ENCODE measurements at regions of chr20 and their contacts with region 1.

Region 1: GRCh38 chr20:3222635-3223600 is 13.6 kb downstream of the ITPA start:
- DNase-seq: peak; percentile 30 to 84 (median 51)
- ATAC-seq: peak; percentile 89 to 93
- H3K4me3 Mint-ChIP-seq: peak overlapping the region; percentile 36 to 75 (median 64)
- H3K27ac Mint-ChIP-seq: peak overlapping the region; percentile 80 to 94 (median 91)
- H3K4me1 Mint-ChIP-seq: peaks cover 3 to 32% (median 22%) of the 10 kb centered on the region in 4 donors
- H3K27me3 Mint-ChIP-seq: no peaks in the 10 kb centered on the region

Region 2: GRCh38 chr20:2972126-2972525 is 250.8 kb before region 1 on chr20:
- POLR2A ChIA-PET with region 1: no interaction called
- DNase-seq: no peak
- ATAC-seq: no peak
- H3K4me3 Mint-ChIP-seq: no peak overlapping the region
- H3K27ac Mint-ChIP-seq: no peak overlapping the region
- H3K4me1 Mint-ChIP-seq: peaks cover 2 to 6% (median 4%) of the 10 kb centered on the region in 4 donors
- H3K27me3 Mint-ChIP-seq: no peaks in the 10 kb centered on the region

Region 3: GRCh38 chr20:3209257-3209945 is 13.5 kb before region 1 on chr20 and contains the start of gene ITPA:
- POLR2A ChIA-PET with region 1: interaction called, 24 read pairs
- DNase-seq: peak; percentile 19 to 79 (median 48)
- ATAC-seq: peak; percentile 43 to 60
- H3K4me3 Mint-ChIP-seq: peak within 1 kb of the TSS; percentile 86 to 99 (median 96)
- H3K27ac Mint-ChIP-seq: peak within 1 kb of the TSS; percentile 57 to 99 (median 94)
- H3K4me1 Mint-ChIP-seq: peaks cover 23 to 42% (median 35%) of the 10 kb centered on the region in 4 donors
- H3K27me3 Mint-ChIP-seq: no peaks in the 10 kb centered on the region
- polyA plus RNA-seq, gene ITPA: 46.2 to 72.9 (median 56.9) TPM

Region 4: GRCh38 chr20:3239026-3239866 is 16.3 kb after region 1 on chr20 and contains the start of gene SLC4A11:
- POLR2A ChIA-PET with region 1: interaction called, 18 read pairs
- DNase-seq: peak in 4 of 10 donors; percentile 14 to 60 (median 30)
- ATAC-seq: peak; percentile 68 to 70
- H3K4me3 Mint-ChIP-seq: peak within 1 kb of the TSS; percentile 79 to 95 (median 90)
- H3K27ac Mint-ChIP-seq: peak within 1 kb of the TSS in 2 of 10 donors; percentile 66 to 70
- H3K4me1 Mint-ChIP-seq: peaks cover 4 to 16% (median 14%) of the 10 kb centered on the region in 4 donors
- H3K27me3 Mint-ChIP-seq: peaks cover 17 to 60% (median 36%) of the 10 kb centered on the region in 5 donors
- polyA plus RNA-seq, gene SLC4A11: not detected

Region 5: GRCh38 chr20:3273371-3273770 is 50.5 kb after region 1 on chr20:
- POLR2A ChIA-PET with region 1: no interaction called
- DNase-seq: no peak
- ATAC-seq: no peak
- H3K4me3 Mint-ChIP-seq: no peak overlapping the region
- H3K27ac Mint-ChIP-seq: no peak overlapping the region
- H3K4me1 Mint-ChIP-seq: no peaks in the 10 kb centered on the region
- H3K27me3 Mint-ChIP-seq: no peaks in the 10 kb centered on the region